ENCODE measurements at regions of chr5 and their contacts with region 1.

Region 1: GRCh38 chr5:107673368-107674136 is 2.8 kb upstream of the EFNA5 start:
- DNase-seq: peak; percentile 87
- ATAC-seq: peak; percentile 62
- H3K4me3 ChIP-seq: peak overlapping the region; percentile 52
- H3K27ac ChIP-seq: no peak overlapping the region
- H3K4me1 ChIP-seq: no peaks in the 10 kb centered on the region
- H3K27me3 ChIP-seq: peaks cover 8% of the 10 kb centered on the region; the same call in 1 of the 2 replicates
- CTCF ChIP-seq: peak; percentile 96
- POLR2A ChIP-seq: no peak
- RAD21 ChIP-seq: peak; percentile 94

Region 2: GRCh38 chr5:106116689-106117088 is 1556.9 kb before region 1 on chr5:
- CTCF ChIA-PET with region 1: no interaction called
- POLR2A ChIA-PET with region 1: no interaction called
- dilution Hi-C with region 1: no loop called
- in situ Hi-C with region 1: no loop called
- intact Hi-C with region 1: loop called (anchors 5 kb)
- DNase-seq: peak; percentile 79
- ATAC-seq: peak; percentile 96
- H3K4me3 ChIP-seq: no peak overlapping the region
- H3K27ac ChIP-seq: peak overlapping the region; percentile 46; the same call in 1 of the 2 replicates
- H3K4me1 ChIP-seq: peaks cover 2% of the 10 kb centered on the region
- H3K27me3 ChIP-seq: no peaks in the 10 kb centered on the region
- CTCF ChIP-seq: no peak
- POLR2A ChIP-seq: no peak
- RAD21 ChIP-seq: no peak

Region 3: GRCh38 chr5:106875591-106876297 is 797.8 kb before region 1 on chr5:
- CTCF ChIA-PET with region 1: no interaction called
- POLR2A ChIA-PET with region 1: no interaction called
- dilution Hi-C with region 1: no loop called
- in situ Hi-C with region 1: no loop called
- intact Hi-C with region 1: loop called (anchors 5 kb)
- DNase-seq: peak; percentile 36
- ATAC-seq: peak; percentile 68
- H3K4me3 ChIP-seq: no peak overlapping the region
- H3K27ac ChIP-seq: no peak overlapping the region
- H3K4me1 ChIP-seq: no peaks in the 10 kb centered on the region
- H3K27me3 ChIP-seq: no peaks in the 10 kb centered on the region
- CTCF ChIP-seq: peak; percentile 51
- POLR2A ChIP-seq: no peak
- RAD21 ChIP-seq: peak; percentile 64

Region 4: DNA sequence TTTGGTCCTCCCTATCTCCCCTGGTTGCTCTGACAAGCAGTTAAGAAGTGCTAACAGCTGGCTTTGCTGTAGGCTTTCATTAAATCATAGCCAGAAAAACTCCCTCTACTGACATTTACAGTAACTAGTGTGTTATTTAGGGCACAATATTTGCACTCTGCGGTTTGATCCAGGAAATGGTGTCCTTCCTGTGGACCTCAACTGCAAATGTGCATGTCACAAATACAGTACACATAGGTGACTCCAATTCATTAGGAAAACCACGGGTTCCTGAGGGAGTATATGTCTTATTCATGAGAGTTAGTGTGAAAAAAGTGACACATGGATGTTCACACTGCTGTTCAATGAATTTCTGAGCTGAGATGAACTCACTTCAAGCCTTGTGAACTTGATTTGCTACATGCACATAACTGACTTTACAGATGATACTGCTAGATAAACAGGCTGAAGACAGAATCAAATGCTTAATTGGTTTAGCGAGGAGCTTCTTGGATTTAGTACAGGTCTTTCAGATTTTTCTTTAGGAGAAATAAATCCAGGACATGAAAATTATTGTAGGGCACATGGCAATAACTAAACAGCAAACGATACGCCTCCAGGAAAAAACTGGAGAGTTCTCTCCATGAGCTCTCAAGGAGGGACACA is 284.3 kb before region 1 on chr5:
- CTCF ChIA-PET with region 1: no interaction called
- POLR2A ChIA-PET with region 1: no interaction called
- dilution Hi-C with region 1: no loop called
- in situ Hi-C with region 1: no loop called
- intact Hi-C with region 1: loop called (anchors 2 kb)
- DNase-seq: peak; percentile 54
- ATAC-seq: peak; percentile 66
- H3K4me3 ChIP-seq: no peak overlapping the region
- H3K27ac ChIP-seq: peak overlapping the region; percentile 14; the same call in 1 of the 2 replicates
- H3K4me1 ChIP-seq: peaks cover 9% of the 10 kb centered on the region
- H3K27me3 ChIP-seq: no peaks in the 10 kb centered on the region
- CTCF ChIP-seq: 0 out of 2 replicates have a peak, but pooled peaks have one; percentile 11
- POLR2A ChIP-seq: no peak
- RAD21 ChIP-seq: no peak

Region 5: DNA sequence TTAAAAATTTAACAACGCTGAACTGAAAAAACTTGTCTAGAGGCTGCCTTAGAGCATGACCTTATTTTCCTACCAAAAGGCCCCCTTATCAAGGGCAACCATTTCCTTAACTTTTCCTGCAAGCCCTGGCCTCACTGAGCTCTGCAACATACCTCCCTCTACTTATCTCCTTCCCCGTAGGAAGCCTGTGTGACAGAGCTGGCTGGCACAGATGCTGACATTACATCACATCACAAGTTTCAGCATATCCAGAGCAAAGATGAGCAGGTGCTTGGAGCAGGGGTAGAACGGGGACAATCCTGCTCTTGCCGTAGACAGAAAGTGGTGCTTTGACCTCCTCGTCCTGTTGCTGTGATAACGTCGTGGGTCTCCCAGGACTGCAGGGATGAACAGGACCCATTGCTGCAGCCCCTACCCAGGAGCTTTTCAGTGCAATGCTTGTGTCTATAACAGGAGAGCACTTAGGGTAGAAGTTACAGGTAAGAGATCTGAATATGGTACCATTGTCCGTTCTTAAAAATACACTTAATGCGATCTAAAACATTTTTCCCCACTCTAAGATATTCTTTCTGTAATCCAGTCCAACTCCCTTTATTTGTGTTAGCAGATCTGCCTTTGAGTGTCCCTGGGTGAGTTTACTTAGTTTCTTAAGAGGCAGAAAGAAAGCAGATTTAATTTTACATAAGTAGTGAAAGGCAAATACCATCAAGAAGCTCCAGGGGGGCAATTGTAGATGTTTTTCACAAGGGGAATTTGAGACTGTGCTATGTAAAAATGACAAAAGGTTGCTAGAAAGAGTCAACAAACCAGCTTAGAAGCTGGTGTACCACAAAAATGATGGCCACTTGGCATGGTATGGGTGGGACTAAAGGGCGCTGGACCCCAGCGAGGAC is 99.1 kb after region 1 on chr5:
- CTCF ChIA-PET with region 1: no interaction called
- POLR2A ChIA-PET with region 1: no interaction called
- dilution Hi-C with region 1: no loop called
- in situ Hi-C with region 1: no loop called
- intact Hi-C with region 1: no loop called
- DNase-seq: no peak
- ATAC-seq: no peak
- H3K4me3 ChIP-seq: no peak overlapping the region
- H3K27ac ChIP-seq: no peak overlapping the region
- H3K4me1 ChIP-seq: peaks cover 1% of the 10 kb centered on the region; the same call in 1 of the 2 replicates
- H3K27me3 ChIP-seq: no peaks in the 10 kb centered on the region
- CTCF ChIP-seq: no peak
- POLR2A ChIP-seq: no peak
- RAD21 ChIP-seq: no peak

Region 6: GRCh38 chr5:108093186-108093585 is 419.6 kb after region 1 on chr5:
- CTCF ChIA-PET with region 1: no interaction called
- POLR2A ChIA-PET with region 1: no interaction called
- dilution Hi-C with region 1: no loop called
- in situ Hi-C with region 1: no loop called
- intact Hi-C with region 1: loop called (anchors 2 kb)
- DNase-seq: peak; percentile 47
- ATAC-seq: no peak; the same call in 1 of the 2 replicates
- H3K4me3 ChIP-seq: no peak overlapping the region
- H3K27ac ChIP-seq: no peak overlapping the region
- H3K4me1 ChIP-seq: no peaks in the 10 kb centered on the region
- H3K27me3 ChIP-seq: no peaks in the 10 kb centered on the region
- CTCF ChIP-seq: peak; percentile 54
- POLR2A ChIP-seq: no peak
- RAD21 ChIP-seq: peak; percentile 47

Region 7: DNA sequence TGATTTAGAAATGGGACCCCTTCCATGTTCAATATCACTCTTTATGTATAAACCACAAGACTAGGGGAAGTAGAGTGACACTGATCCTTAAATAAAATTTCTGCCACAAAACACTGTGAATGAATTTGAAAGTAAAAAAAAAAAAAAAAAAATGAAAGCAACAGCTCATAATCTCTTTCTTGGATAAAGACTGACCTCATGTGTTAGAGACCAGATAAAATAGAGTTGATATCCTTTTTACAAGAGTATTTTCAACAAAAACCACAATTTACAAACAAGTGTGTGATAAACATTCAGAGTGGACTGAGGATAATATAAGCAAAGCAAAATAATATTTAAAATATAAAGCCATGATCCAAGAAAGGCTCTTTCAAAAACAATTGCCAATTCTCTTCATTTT is 528.2 kb after region 1 on chr5:
- CTCF ChIA-PET with region 1: no interaction called
- POLR2A ChIA-PET with region 1: no interaction called
- dilution Hi-C with region 1: no loop called
- in situ Hi-C with region 1: no loop called
- intact Hi-C with region 1: loop called (anchors 1 kb)
- DNase-seq: no peak
- ATAC-seq: no peak
- H3K4me3 ChIP-seq: no peak overlapping the region
- H3K27ac ChIP-seq: no peak overlapping the region
- H3K4me1 ChIP-seq: no peaks in the 10 kb centered on the region
- H3K27me3 ChIP-seq: no peaks in the 10 kb centered on the region
- CTCF ChIP-seq: peak; percentile 18; the same call in 1 of the 2 replicates
- POLR2A ChIP-seq: no peak
- RAD21 ChIP-seq: no peak